Right cardiac atrium (tissue), 5 donors: ENCODE measurements at regions of chr3 and their contacts with region 1.

Region 1: GRCh38 chr3:150408221-150409102 is at the start of gene TSC22D2:
- DNase-seq: peak; percentile 96 to 99 (median 98)
- ATAC-seq: peak; percentile 93
- H3K4me3 ChIP-seq: peak within 1 kb of the TSS; percentile 86
- H3K27ac ChIP-seq: peak within 1 kb of the TSS; percentile 99
- H3K4me1 ChIP-seq: no peaks in the 10 kb centered on the region
- H3K27me3 ChIP-seq: no peaks in the 10 kb centered on the region
- total RNA-seq, gene TSC22D2: 36.5 to 43.6 (median 38.1) TPM

Region 2: DNA sequence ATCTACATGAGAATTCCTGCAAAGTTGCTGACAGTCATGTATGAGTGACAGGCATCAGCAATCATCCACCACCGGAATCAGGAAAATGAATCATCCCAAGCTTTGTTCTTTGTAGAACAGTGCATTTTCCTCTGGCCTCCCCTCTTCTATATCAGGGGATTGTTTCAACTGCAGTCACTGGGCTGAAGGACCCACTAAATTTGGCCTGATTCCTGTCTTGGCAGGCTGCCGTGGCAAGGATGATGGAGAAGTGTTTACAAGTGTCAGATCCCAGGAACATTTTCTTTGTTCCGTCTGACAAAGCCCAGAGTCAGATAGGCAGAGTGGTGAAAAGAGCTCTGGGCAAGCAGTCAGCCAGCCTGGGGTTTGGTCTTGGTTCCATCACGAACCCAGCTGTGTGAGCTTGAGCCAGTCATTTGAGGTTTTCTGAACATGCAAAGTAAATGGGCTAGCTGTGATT is 175.4 kb before region 1 on chr3:
- intact Hi-C with region 1: loop called in 3 of 4 experiments (anchors 5 kb)
- DNase-seq: peak; percentile 79 to 93 (median 90)
- ATAC-seq: peak; percentile 91 to 92
- H3K4me3 ChIP-seq: no peak overlapping the region
- H3K27ac ChIP-seq: peak overlapping the region; percentile 25
- H3K4me1 ChIP-seq: peaks cover 5% of the 10 kb centered on the region
- H3K27me3 ChIP-seq: no peaks in the 10 kb centered on the region

Region 3: DNA sequence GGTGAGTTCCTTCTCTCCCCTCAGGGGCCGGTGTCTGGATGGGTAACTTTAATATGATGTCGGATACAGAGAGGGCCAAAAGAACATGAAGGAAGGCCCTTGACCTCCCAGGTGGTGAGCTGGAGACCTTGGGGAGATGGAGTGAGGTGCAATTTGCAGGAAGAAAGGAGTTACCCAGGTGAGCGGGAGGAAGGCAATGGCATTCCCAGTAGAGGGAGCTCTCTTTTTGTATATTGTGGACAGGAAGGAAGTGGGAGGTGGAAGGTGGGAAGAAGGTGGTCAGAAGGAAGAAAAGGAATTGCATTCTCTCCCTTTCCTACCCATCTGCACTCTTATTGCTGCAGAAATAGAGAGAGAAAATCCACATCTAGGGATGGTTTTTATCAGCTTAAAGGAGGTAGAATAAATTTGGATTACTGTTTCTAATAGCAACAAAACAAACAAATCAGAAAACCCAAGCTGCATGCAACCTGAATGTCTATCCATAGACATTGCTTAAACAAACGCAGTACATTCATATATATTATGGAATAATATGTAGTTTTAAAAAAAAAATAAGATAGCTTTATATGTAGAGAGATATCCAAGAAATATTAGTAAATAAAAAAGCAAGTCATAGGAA is 169.4 kb before region 1 on chr3:
- intact Hi-C with region 1: loop called in 3 of 4 experiments (anchors 5 kb)
- DNase-seq: no peak
- ATAC-seq: no peak
- H3K4me3 ChIP-seq: no peak overlapping the region
- H3K27ac ChIP-seq: no peak overlapping the region
- H3K4me1 ChIP-seq: peaks cover 7% of the 10 kb centered on the region
- H3K27me3 ChIP-seq: no peaks in the 10 kb centered on the region

Region 4: GRCh38 chr3:150286390-150287147 is 121.9 kb before region 1 on chr3:
- intact Hi-C with region 1: loop called in 1 of 4 experiments (anchors 10 kb)
- DNase-seq: no peak
- ATAC-seq: peak; percentile 67 to 80
- H3K4me3 ChIP-seq: no peak overlapping the region
- H3K27ac ChIP-seq: no peak overlapping the region
- H3K4me1 ChIP-seq: no peaks in the 10 kb centered on the region
- H3K27me3 ChIP-seq: no peaks in the 10 kb centered on the region

Region 5: DNA sequence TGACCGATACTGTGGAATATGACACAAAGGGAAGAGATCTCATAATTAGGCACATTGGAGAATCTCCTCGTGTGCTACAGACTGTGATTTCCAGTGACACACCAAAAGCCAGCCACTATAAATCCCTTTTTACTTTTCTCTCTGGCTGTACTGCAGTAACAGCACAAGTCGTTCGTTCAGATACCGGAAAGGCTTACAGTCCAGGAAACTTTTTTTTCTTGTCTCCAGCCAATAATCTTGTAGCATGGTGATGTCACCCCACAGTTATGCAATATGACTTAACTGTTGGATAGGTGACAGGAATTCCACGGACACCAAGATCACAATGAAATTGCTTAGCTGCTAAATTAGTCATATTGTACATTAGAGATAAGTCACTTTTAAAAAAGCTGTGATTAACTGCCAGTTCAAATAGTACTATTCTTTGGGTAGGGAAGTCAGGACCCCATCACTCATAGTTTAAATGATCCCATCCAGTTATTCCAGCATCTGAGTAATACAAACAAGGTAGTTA is 36.7 kb before region 1 on chr3:
- intact Hi-C with region 1: loop called in 1 of 4 experiments (anchors 5 kb)
- DNase-seq: peak in 1 of 3 donors; percentile 33
- ATAC-seq: peak; percentile 93 to 96
- H3K4me3 ChIP-seq: peak overlapping the region; percentile 59
- H3K27ac ChIP-seq: peak overlapping the region; percentile 94
- H3K4me1 ChIP-seq: peaks cover 2% of the 10 kb centered on the region
- H3K27me3 ChIP-seq: no peaks in the 10 kb centered on the region

Region 6: DNA sequence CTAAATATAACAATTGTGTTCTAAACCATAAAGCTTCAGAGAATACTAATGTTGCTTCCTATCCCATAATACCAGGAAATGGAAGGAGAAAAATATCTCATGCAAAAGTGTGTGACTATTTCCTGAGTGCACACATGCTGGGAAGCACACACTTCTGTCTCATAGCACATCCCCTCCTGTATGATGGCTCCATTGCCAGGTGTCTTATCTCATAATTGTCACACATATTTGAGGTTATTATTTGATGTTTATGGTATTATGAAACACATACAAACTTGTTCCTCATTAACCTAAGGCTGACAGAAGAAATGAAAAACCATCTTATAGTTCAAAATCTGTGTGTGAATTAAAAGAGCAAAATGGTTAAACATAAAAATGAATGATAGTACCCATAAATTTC is 72.4 kb after region 1 on chr3:
- intact Hi-C with region 1: loop called in 1 of 4 experiments (anchors 10 kb)
- DNase-seq: no peak
- ATAC-seq: no peak
- H3K4me3 ChIP-seq: no peak overlapping the region
- H3K27ac ChIP-seq: no peak overlapping the region
- H3K4me1 ChIP-seq: no peaks in the 10 kb centered on the region
- H3K27me3 ChIP-seq: no peaks in the 10 kb centered on the region

Region 7: GRCh38 chr3:150495563-150496168 is 87.2 kb after region 1 on chr3:
- intact Hi-C with region 1: loop called in 1 of 4 experiments (anchors 5 kb)
- DNase-seq: no peak
- ATAC-seq: no peak
- H3K4me3 ChIP-seq: no peak overlapping the region
- H3K27ac ChIP-seq: no peak overlapping the region
- H3K4me1 ChIP-seq: no peaks in the 10 kb centered on the region
- H3K27me3 ChIP-seq: no peaks in the 10 kb centered on the region

Region 8: GRCh38 chr3:150925751-150926201 is 517.3 kb after region 1 on chr3:
- intact Hi-C with region 1: no loop called
- DNase-seq: peak; percentile 15 to 64 (median 54)
- ATAC-seq: peak; percentile 38 to 45
- H3K4me3 ChIP-seq: no peak overlapping the region
- H3K27ac ChIP-seq: no peak overlapping the region
- H3K4me1 ChIP-seq: no peaks in the 10 kb centered on the region
- H3K27me3 ChIP-seq: no peaks in the 10 kb centered on the region